Activated CD4-positive, alpha-beta memory T cell treated with anti-CD3 and anti-CD28 coated beads, Interleukin-2, amount 10 ng/mL, durations not matched to agents 7 days and 5 days (primary cell): ENCODE measurements at regions of chr5 and their contacts with region 1.

Region 1: GRCh38 chr5:95781101-95781583 is 41.4 kb downstream of the GLRX start:
- DNase-seq: peak; percentile 75
- H3K4me3 Mint-ChIP-seq: peak overlapping the region; percentile 34
- H3K27ac Mint-ChIP-seq: no peak overlapping the region
- H3K4me1 Mint-ChIP-seq: peaks cover 27% of the 10 kb centered on the region
- H3K27me3 Mint-ChIP-seq: no peaks in the 10 kb centered on the region

Region 2: DNA sequence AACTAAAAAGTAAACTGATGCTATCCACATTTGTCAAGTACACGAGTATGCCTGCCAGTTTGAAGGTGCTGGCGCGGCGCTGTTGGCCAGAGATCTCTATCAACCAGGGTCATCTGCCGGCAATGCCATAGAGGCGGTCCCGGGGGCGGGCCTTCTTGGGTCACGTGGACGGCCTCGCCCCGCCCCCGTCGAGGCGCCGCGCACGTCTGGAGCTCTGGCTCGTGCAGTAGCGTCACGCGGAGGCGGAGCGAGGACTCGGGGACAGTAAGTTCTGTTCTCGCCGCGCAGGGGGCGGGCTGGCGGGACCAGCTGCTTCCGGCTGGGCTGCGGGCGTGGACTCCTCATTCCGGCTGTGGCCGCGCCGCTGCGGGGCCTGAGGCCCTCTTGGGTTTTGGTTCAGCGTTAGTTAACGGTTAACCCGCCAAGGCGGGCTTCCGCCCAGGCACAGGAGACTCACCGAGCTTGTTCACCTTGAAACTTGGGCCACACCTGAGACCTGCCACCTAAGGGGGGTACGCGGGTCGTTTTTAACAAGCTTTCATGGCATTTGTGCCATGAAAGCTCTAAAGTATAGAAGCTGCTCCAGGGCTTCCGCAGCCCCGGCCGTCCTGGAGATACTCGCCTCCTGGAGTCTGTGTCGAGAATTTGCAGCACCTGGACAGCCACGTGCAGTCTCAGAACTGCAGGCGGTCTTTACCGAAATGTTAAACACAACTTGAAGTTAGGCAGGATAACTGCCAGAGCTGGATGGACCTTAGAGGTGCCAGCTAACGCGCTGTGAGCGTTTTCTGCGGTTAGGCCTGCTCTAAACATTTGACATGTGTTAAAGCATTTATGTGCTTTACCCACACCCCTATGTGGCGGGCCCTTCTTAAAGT is 134.3 kb before region 1 on chr5 and contains the start of gene RFESD:
- CTCF ChIA-PET with region 1: interaction called, 29 read pairs
- POLR2A ChIA-PET with region 1: no interaction called
- DNase-seq: peak; percentile 98
- H3K4me3 Mint-ChIP-seq: peak within 1 kb of the TSS; percentile 79
- H3K27ac Mint-ChIP-seq: peak within 1 kb of the TSS; percentile 88
- H3K4me1 Mint-ChIP-seq: peaks cover 45% of the 10 kb centered on the region
- H3K27me3 Mint-ChIP-seq: no peaks in the 10 kb centered on the region
- total RNA-seq, gene RFESD: 5.4 to 6.4 TPM

Region 3: DNA sequence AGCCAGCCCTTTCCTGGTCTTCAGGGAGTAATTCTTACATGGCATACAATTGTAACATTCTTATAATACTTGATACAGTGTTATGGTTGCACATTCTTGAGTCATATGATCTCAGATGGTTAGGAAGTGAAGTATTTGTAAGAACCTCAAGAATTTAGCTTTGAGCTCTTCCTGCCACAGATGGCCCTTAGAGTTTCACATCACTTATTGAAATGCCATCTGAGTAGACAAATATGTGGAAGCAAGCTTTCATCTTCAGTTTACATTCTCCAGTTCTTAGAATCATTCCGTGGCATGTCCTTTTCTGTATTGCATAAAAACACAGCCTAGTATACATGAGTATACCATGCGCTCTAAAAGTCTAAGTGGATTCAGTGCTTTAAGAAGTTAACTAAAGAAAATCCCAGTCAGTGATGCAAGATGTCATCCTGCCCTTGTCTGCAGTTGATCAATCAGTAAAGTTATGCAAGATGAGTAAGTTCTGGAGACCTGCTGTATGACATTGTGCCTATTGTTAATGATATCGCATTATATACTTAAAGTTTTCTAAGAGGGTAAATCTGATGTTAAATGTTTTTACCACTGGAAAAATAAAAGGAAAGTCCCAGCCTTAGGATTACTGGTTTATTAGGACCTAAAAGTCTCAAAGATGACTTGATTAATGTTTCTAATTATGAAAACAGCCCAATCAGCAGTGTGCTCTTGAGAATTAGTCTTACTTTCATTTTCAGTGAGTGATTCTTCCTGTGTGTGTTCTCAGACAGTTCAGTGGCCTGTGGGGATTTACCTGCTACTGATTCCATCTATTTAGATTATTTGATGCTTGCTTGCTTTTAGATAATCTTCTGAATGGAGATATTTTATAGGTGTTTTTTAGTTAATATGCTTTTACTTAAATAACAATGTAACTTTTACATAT is 20.6 kb before region 1 on chr5:
- CTCF ChIA-PET with region 1: interaction called, 26 read pairs
- POLR2A ChIA-PET with region 1: no interaction called
- DNase-seq: no peak
- H3K4me3 Mint-ChIP-seq: peak overlapping the region; percentile 72
- H3K27ac Mint-ChIP-seq: peak overlapping the region; percentile 84
- H3K4me1 Mint-ChIP-seq: peaks cover 32% of the 10 kb centered on the region
- H3K27me3 Mint-ChIP-seq: peaks cover 16% of the 10 kb centered on the region

Region 4: GRCh38 chr5:95794070-95794516 is 13.0 kb after region 1 on chr5:
- CTCF ChIA-PET with region 1: interaction called, 37 read pairs
- POLR2A ChIA-PET with region 1: no interaction called
- DNase-seq: no peak
- H3K4me3 Mint-ChIP-seq: no peak overlapping the region
- H3K27ac Mint-ChIP-seq: no peak overlapping the region
- H3K4me1 Mint-ChIP-seq: peaks cover 2% of the 10 kb centered on the region
- H3K27me3 Mint-ChIP-seq: no peaks in the 10 kb centered on the region

Region 5: DNA sequence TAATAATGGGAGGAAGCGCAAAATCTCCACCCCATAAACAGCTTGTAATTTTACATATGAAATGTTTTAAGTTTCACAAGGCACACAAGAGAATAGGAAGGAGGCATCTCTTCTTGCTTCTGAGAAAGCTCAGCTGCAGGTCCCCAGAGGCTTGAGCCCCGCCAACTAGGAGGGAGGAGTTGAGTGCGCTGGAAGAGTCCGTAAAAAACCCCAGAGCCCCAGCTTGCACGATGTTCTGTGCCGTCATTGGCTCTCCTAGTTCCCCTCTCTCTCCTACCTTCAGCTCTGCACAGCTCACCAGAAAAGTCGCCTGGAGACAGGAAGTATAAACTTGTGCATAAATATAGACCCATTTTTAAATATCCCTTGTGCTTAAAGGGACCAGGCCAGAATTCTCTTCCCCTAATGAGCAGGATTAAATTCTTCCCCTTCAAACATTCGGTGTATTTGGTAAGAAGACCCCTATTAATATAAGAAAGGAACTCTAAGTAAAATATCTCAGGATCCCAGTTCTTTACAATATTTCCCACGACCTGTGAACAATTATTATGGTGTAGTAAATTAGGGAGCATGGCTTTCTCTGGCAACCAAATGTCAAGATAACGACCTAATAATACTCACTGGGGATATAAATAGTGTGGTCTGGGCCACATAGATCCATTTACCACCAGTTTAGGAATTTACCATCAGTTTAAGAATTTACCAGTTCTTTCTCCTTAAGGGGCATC is 27.7 kb after region 1 on chr5:
- CTCF ChIA-PET with region 1: interaction called, 79 read pairs
- POLR2A ChIA-PET with region 1: interaction called, 6 read pairs
- DNase-seq: peak; percentile 81
- H3K4me3 Mint-ChIP-seq: peak overlapping the region; percentile 50
- H3K27ac Mint-ChIP-seq: peak overlapping the region; percentile 78
- H3K4me1 Mint-ChIP-seq: peaks cover 60% of the 10 kb centered on the region
- H3K27me3 Mint-ChIP-seq: no peaks in the 10 kb centered on the region

Region 6: DNA sequence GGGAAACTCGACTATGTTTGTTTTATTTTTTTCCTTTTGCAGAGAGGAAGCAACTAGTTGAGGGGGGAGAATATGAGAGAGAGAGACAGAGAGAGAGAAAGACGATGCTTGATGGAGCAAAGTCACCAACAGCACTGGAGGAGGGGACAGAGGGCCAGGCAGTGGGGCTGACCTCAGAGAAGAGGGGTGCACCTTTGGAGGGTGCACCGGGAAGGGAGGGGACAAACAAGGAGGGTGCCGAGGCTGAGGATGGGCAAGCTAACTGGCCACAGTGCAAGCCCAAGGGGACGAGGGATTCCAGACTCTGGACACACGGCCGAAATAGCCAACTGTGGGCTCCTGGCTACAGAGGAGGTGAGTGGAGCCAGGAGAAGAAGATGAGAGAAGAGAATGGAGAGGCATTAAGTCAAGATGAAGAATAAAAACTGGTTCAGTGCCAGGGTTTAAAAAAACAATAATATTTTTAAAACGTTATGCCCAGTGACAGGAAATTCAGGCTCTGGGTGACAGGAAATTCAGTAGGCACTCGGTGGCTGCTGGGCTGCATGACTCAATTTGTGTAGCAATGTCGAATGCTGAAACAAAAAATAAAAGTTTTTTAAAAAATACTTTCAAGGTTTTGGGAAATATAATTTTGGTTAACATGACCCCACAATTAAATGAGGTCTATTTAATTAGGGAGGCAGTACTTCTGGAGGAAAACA is 54.7 kb after region 1 on chr5:
- CTCF ChIA-PET with region 1: interaction called, 41 read pairs
- POLR2A ChIA-PET with region 1: interaction called, 4 read pairs
- DNase-seq: no peak
- H3K4me3 Mint-ChIP-seq: peak overlapping the region; percentile 83
- H3K27ac Mint-ChIP-seq: peak overlapping the region; percentile 89
- H3K4me1 Mint-ChIP-seq: peaks cover 44% of the 10 kb centered on the region
- H3K27me3 Mint-ChIP-seq: no peaks in the 10 kb centered on the region

Region 7: GRCh38 chr5:95870105-95870672 is 89.0 kb after region 1 on chr5:
- CTCF ChIA-PET with region 1: interaction called, 13 read pairs
- POLR2A ChIA-PET with region 1: no interaction called
- DNase-seq: peak; percentile 37
- H3K4me3 Mint-ChIP-seq: peak overlapping the region; percentile 62
- H3K27ac Mint-ChIP-seq: peak overlapping the region; percentile 89
- H3K4me1 Mint-ChIP-seq: peaks cover 47% of the 10 kb centered on the region
- H3K27me3 Mint-ChIP-seq: no peaks in the 10 kb centered on the region